ENCODE measurements at regions of chr13 and their contacts with region 1.

Region 1: DNA sequence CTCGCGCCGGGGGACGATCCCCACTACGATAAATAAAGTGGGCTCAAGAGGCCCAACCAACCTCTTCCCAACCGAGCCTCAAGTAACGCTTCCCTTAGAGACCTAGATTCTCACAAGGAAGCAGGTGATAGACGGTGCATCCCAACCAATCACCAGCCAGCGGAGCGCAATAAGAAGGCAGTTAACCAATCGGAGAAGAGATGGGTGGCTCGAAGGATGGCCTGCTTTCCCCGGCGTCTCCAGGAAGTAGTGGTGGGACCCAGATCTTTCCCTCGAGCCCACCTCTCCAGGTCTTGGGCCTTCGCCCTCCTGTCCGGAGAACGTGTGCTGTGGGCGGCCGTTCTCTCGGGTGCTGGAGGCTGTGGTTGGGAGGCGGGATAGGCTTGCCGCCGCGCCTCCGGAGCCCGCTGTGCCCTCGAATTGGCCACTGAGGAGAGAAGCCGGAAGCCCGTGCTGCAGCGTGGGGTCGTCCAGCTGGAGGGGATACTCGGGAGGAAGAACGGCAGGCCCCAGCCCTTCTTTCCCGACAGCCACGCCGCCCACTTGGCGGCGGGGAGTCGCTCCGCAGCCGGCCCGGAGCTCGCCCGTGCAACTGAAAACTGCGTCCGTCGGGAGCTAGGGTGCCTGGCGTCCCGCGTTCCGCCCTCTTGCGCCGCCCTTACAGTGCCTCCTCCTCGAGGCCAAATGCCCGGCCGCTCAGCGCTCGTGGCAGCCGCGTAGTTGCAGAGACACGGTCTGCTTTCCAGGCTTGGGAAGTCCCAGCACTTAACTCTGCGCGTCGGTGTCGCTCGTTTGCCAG is at the start of gene RNF6:
- DNase-seq: peak; percentile 97
- total RNA-seq, gene RNF6: 29.6 TPM

Region 2: DNA sequence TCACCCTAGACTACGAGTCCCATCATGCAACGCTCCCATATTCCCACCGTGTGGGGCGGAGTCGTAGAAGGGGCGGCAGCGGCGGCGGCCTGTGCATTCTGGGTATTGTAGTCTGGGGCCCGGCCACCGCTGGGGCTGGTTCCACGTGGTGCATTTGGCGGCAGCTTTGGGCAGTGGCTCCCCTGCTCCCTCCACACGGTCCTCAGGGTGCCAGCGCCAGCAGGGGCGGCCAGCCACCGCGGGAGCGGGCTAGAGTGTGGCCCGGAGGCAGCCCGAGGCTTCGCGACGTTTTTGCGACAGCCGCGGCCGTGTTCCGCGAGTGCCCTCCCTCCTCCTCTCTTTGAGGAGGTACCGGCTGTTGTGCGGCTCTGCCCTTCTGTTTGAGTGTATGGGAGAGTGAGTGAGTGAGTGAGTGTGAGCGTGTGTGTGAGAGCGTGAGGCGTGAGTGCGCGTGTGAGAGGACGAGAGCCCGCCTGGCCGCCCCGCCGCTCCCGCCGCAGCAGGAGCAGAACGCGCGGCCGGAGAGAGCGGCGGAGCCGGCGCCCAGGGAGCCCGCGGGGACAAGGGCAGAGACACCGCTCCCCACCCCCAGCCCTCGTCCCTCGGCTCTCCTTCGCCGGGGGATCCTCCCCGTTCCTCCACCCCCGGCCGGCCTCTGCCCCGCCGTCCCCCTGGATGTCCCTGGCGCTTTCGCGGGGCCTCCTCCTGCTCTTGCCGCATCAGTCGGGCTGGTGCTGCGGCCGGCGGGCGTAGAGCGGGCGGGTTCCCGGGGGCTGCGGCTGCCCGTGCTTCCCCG is 32.1 kb after region 1 on chr13 and contains the start of gene CDK8:
- intact Hi-C with region 1: loop called (anchors 2 kb)
- DNase-seq: peak; percentile 94
- total RNA-seq, gene CDK8: 12.4 TPM